A549 (cell line): ENCODE measurements at regions of chrX and their contacts with region 1.

Region 1: GRCh38 chrX:100768679-100769338 is 36.9 kb upstream of the SYTL4 start:
- DNase-seq: peak; percentile 43 to 61
- ATAC-seq: peak; percentile 30 to 71; a peak in 4 of 6 replicates
- H3K4me3 ChIP-seq: no peak overlapping the region
- H3K27ac ChIP-seq: no peak overlapping the region
- H3K4me1 ChIP-seq: no peaks in the 10 kb centered on the region
- CTCF ChIP-seq: peak; percentile 99
- EP300 ChIP-seq: no peak
- POLR2A ChIP-seq: no peak
- RAD21 ChIP-seq: peak; percentile 95 to 96

Region 2: DNA sequence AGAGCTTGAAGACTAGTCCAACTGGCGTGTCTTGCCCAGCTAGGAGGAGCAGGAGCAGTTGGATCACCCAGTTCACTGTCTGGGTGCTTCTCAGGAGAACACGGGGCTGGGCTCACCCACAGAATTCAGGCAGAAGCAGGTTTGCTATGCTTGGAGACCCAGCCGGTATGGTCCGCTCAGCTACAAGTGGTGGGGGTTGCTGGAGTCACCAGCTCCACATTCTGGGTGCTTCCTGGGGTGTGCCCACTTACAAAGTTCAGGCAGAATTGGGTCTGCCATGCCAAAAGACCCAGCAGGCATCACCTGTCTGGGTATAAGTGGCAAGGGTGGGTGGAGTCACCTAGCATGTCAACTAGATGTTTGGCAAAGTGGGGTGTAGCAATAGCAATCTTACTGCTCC is 1420.6 kb before region 1 on chrX:
- CTCF ChIA-PET with region 1: no interaction called
- POLR2A ChIA-PET with region 1: no interaction called
- DNase-seq: no peak
- ATAC-seq: no peak
- H3K4me3 ChIP-seq: no peak overlapping the region
- H3K27ac ChIP-seq: no peak overlapping the region
- H3K4me1 ChIP-seq: no peaks in the 10 kb centered on the region
- CTCF ChIP-seq: no peak
- EP300 ChIP-seq: no peak
- POLR2A ChIP-seq: no peak
- RAD21 ChIP-seq: no peak

Region 3: GRCh38 chrX:100587885-100588284 is 180.9 kb before region 1 on chrX:
- CTCF ChIA-PET with region 1: no interaction called
- POLR2A ChIA-PET with region 1: no interaction called
- DNase-seq: no peak
- ATAC-seq: no peak
- H3K4me3 ChIP-seq: no peak overlapping the region
- H3K27ac ChIP-seq: no peak overlapping the region
- H3K4me1 ChIP-seq: no peaks in the 10 kb centered on the region
- CTCF ChIP-seq: no peak
- EP300 ChIP-seq: no peak
- POLR2A ChIP-seq: no peak
- RAD21 ChIP-seq: no peak

Region 4: DNA sequence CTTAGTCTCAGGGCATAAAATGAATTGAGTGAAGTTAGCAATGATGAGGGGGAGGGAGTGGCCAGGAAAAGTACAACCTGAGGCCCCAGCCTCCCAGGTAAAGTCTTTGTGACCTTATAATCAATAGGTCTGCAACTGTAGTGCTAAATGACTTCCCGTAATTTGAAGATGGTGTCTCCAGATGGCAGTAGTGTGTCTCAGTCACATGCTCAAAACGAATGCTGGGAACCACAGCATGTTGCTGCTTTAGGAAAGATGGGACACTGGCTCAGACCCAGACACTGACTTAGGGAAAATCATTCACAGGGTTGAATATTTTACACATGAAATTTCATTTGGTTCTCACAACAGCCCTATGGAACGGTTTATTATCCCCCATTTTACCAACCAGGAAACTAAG is 114.5 kb before region 1 on chrX:
- CTCF ChIA-PET with region 1: interaction called, 18 read pairs
- POLR2A ChIA-PET with region 1: no interaction called
- DNase-seq: peak; percentile 18 to 47
- ATAC-seq: peak; percentile 63 to 85; a peak in 5 of 6 replicates
- H3K4me3 ChIP-seq: no peak overlapping the region
- H3K27ac ChIP-seq: 0 out of 6 replicates have a peak overlapping the region, but pooled peaks of 1 of the 2 experiments have one; percentile 26
- H3K4me1 ChIP-seq: peaks cover 11% of the 10 kb centered on the region
- CTCF ChIP-seq: peak; percentile 38; the same call in 2 of the 3 replicates
- EP300 ChIP-seq: no peak
- POLR2A ChIP-seq: no peak
- RAD21 ChIP-seq: no peak

Region 5: DNA sequence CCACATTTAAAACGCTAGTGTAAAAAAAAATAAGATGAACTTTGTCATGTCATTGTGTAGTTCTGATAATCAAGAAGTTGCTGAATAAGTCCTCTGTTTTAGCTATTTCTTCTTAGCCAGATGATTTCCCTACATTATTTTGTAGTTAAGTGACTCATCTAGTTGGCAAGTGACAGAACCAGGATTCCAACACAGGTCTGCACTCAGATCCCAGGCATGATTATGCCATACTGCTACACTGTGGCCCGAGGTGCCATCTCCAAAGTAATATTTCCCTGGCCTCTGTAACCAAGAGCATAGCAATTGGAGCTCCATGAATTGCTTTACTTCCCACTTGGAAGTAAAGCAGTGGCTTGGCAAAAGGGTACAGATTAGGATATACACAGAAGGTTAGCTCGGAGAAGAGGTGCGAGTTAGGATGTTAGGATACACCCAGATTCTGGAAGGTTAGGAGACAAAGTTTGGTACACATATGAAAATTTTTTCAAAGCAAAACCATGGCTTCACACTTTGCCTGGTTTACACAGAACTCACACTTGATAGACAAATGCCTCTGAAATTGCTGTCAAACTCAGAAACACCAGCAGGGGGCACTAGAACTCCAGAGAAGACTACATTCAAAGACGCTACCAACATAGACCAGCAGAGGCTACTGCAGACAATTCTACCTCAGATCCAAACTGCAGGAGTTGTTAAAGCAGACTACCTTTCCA is 83.4 kb before region 1 on chrX:
- CTCF ChIA-PET with region 1: interaction called, 223 read pairs
- POLR2A ChIA-PET with region 1: no interaction called
- DNase-seq: peak; percentile 55 to 78
- ATAC-seq: peak; percentile 95 to 98
- H3K4me3 ChIP-seq: no peak overlapping the region
- H3K27ac ChIP-seq: no peak overlapping the region
- H3K4me1 ChIP-seq: no peaks in the 10 kb centered on the region
- CTCF ChIP-seq: peak; percentile 92
- EP300 ChIP-seq: no peak
- POLR2A ChIP-seq: no peak
- RAD21 ChIP-seq: peak; percentile 92 to 94

Region 6: DNA sequence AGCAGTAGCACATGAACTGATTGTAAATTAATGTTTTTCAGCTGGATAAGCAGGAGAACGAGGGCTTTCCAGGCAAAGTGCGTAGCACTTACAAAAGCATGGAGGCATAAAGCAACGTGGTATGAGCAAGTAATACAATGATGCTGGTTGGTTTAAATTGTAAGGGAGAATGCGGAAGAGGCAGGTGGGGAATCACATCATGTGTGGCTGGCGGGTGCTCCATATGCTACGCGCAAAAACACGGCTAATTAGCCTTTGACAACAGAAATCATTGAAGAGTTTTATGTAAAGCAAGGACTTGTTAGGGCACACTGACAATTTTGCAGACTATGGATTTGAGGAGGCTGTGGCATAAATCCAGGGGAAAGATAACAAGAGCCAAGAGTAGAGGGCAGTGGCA is 51.4 kb before region 1 on chrX:
- CTCF ChIA-PET with region 1: interaction called, 12 read pairs
- POLR2A ChIA-PET with region 1: no interaction called
- DNase-seq: no peak
- ATAC-seq: no peak
- H3K4me3 ChIP-seq: no peak overlapping the region
- H3K27ac ChIP-seq: no peak overlapping the region
- H3K4me1 ChIP-seq: peaks cover 6% of the 10 kb centered on the region; the same call in 2 of the 3 replicates
- CTCF ChIP-seq: no peak
- EP300 ChIP-seq: no peak
- POLR2A ChIP-seq: no peak
- RAD21 ChIP-seq: no peak

Region 7: GRCh38 chrX:100750883-100751282 is 17.9 kb before region 1 on chrX:
- CTCF ChIA-PET with region 1: interaction called, 32 read pairs
- POLR2A ChIA-PET with region 1: no interaction called
- DNase-seq: no peak
- ATAC-seq: no peak
- H3K4me3 ChIP-seq: no peak overlapping the region
- H3K27ac ChIP-seq: no peak overlapping the region
- H3K4me1 ChIP-seq: no peaks in the 10 kb centered on the region
- CTCF ChIP-seq: no peak
- EP300 ChIP-seq: no peak
- POLR2A ChIP-seq: no peak
- RAD21 ChIP-seq: no peak

Region 8: DNA sequence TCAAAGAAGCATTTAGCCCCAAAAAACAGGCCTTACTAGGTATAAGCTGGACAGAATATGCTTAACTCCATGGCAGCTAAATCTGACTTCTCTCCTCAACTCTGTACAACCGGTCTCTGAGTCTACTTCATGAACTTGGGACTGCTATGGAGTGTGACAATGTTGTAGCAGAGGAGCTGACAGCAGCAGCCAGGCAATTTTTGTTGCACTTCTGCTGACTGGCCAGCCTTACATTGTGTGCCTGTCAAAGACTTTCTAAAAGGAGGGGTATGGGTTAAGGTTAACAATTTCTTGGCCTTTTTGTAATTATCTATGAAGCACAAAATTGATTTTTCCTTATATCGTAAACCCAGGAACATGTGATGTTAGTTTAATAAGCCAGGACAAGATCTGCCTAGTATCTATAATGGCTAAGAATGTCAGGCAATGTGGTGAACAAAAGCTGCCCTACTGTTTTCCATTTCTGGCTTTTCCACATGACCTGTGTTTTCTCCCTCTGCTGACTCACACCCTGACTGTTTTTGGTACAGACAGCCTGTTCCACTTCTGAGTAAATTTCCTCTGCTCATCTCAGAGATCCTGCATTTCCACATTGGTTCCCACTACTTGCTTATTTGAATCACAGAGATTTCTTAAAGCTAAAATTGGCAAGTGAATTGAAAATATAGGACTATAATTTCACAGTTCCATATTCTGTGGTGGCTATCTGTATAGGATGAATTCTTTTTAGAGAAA is 96.0 kb after region 1 on chrX:
- CTCF ChIA-PET with region 1: no interaction called
- POLR2A ChIA-PET with region 1: no interaction called
- DNase-seq: no peak
- ATAC-seq: no peak
- H3K4me3 ChIP-seq: no peak overlapping the region
- H3K27ac ChIP-seq: no peak overlapping the region; a peak in 1 of 6 replicates
- H3K4me1 ChIP-seq: no peaks in the 10 kb centered on the region; the same call in 2 of the 3 replicates
- CTCF ChIP-seq: no peak
- EP300 ChIP-seq: no peak
- POLR2A ChIP-seq: no peak
- RAD21 ChIP-seq: no peak

Region 9: GRCh38 chrX:101009086-101009485 is 240.3 kb after region 1 on chrX:
- CTCF ChIA-PET with region 1: no interaction called
- POLR2A ChIA-PET with region 1: no interaction called
- DNase-seq: no peak
- ATAC-seq: no peak
- H3K4me3 ChIP-seq: no peak overlapping the region
- H3K27ac ChIP-seq: no peak overlapping the region
- H3K4me1 ChIP-seq: no peaks in the 10 kb centered on the region
- CTCF ChIP-seq: no peak
- EP300 ChIP-seq: no peak
- POLR2A ChIP-seq: no peak
- RAD21 ChIP-seq: no peak